Natural killer cell (primary cell): ENCODE measurements at regions of chr12 and their contacts with region 1.

Region 1: DNA sequence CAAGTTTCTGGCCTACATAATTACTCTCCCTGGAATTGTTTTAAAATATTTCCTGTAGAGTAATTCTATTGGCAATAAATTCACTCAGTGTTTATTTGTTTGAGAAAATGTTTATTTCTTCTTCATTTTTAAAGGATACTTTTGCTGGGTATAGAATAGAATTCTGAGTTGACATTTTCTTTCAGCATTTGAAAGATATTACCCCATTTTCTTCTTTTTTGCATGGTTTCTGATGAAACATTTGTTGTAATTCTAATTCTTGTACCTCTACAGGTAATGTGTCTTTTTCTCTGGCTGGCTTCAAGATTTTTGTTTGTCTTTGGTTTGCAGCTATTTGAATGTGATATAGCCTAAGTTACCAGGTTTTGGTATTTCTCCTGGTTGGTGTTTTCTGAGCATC is 25.1 kb upstream of the ATF7IP start:
- DNase-seq: no peak
- ATAC-seq: no peak
- H3K4me3 ChIP-seq: no peak overlapping the region
- H3K4me3 Mint-ChIP-seq: no peak overlapping the region
- H3K27ac ChIP-seq: no peak overlapping the region
- H3K27ac Mint-ChIP-seq: no peak overlapping the region
- H3K4me1 ChIP-seq: no peaks in the 10 kb centered on the region
- H3K4me1 Mint-ChIP-seq: no peaks in the 10 kb centered on the region
- H3K27me3 ChIP-seq: no peaks in the 10 kb centered on the region
- H3K27me3 Mint-ChIP-seq: no peaks in the 10 kb centered on the region
- CTCF ChIP-seq: no peak

Region 2: DNA sequence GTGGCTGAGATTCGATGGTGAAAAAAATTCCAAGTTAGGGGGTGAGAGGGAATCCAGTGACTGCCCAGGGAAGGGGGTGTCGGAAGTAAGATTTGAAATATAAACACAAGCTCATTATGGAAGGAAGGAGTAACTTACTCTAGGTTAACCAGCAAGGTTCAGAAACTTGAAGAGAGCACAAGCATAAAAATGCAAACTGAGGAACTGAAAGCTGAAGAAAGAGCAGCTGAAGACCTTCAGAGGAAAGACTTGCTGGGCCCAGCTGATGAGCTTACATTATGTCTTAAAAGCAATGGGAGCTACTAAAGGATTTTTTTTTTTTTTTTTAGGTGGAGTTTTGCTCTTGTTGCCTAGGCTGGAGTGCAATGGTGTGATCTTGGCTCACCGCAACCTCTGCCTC is 169.3 kb before region 1 on chr12:
- intact Hi-C with region 1: no loop called
- DNase-seq: no peak
- ATAC-seq: no peak
- H3K4me3 ChIP-seq: no peak overlapping the region
- H3K4me3 Mint-ChIP-seq: no peak overlapping the region
- H3K27ac ChIP-seq: no peak overlapping the region
- H3K27ac Mint-ChIP-seq: no peak overlapping the region
- H3K4me1 ChIP-seq: no peaks in the 10 kb centered on the region
- H3K4me1 Mint-ChIP-seq: peaks cover 0 to 5% of the 10 kb centered on the region in 2 donors
- H3K27me3 ChIP-seq: no peaks in the 10 kb centered on the region
- H3K27me3 Mint-ChIP-seq: peaks cover 5 to 20% of the 10 kb centered on the region in 2 donors
- CTCF ChIP-seq: no peak

Region 3: GRCh38 chr12:14290951-14291350 is 49.4 kb before region 1 on chr12:
- intact Hi-C with region 1: loop called (anchors 10 kb)
- DNase-seq: no peak
- ATAC-seq: peak in 2 of 3 donors; percentile 56 to 72
- H3K4me3 ChIP-seq: no peak overlapping the region
- H3K4me3 Mint-ChIP-seq: peak overlapping the region; percentile 45
- H3K27ac ChIP-seq: peak overlapping the region; percentile 25
- H3K27ac Mint-ChIP-seq: peak overlapping the region in 1 of 2 donors; percentile 34
- H3K4me1 ChIP-seq: peaks cover 12% of the 10 kb centered on the region
- H3K4me1 Mint-ChIP-seq: peaks cover 14 to 15% of the 10 kb centered on the region in 2 donors
- H3K27me3 ChIP-seq: no peaks in the 10 kb centered on the region
- H3K27me3 Mint-ChIP-seq: no peaks in the 10 kb centered on the region
- CTCF ChIP-seq: no peak